B cell (primary cell): ENCODE measurements at regions of chr17 and their contacts with region 1.

Region 1: GRCh38 chr17:29777663-29778062 is 152.4 kb downstream of the SSH2 start:
- DNase-seq: no peak
- ATAC-seq: no peak
- H3K4me3 ChIP-seq: no peak overlapping the region
- H3K4me3 Mint-ChIP-seq: no peak overlapping the region
- H3K27ac ChIP-seq: no peak overlapping the region
- H3K27ac Mint-ChIP-seq: no peak overlapping the region
- H3K4me1 ChIP-seq: peaks cover 9 to 10% of the 10 kb centered on the region in 2 donors
- H3K4me1 Mint-ChIP-seq: peaks cover 12% of the 10 kb centered on the region
- H3K27me3 ChIP-seq: no peaks in the 10 kb centered on the region
- H3K27me3 Mint-ChIP-seq: no peaks in the 10 kb centered on the region
- CTCF ChIP-seq: no peak

Region 2: GRCh38 chr17:29579866-29580771 is 197.5 kb before region 1 on chr17:
- CTCF ChIA-PET with region 1: interaction called, 17 read pairs
- POLR2A ChIA-PET with region 1: no interaction called
- intact Hi-C with region 1: loop called (anchors 1 kb)
- DNase-seq: peak; percentile 93
- ATAC-seq: peak; percentile 96
- H3K4me3 ChIP-seq: no peak overlapping the region
- H3K4me3 Mint-ChIP-seq: no peak overlapping the region
- H3K27ac ChIP-seq: no peak overlapping the region
- H3K27ac Mint-ChIP-seq: peak overlapping the region; percentile 87
- H3K4me1 ChIP-seq: peaks cover 19 to 23% of the 10 kb centered on the region in 2 donors
- H3K4me1 Mint-ChIP-seq: peaks cover 27% of the 10 kb centered on the region
- H3K27me3 ChIP-seq: no peaks in the 10 kb centered on the region
- H3K27me3 Mint-ChIP-seq: no peaks in the 10 kb centered on the region
- CTCF ChIP-seq: peak; percentile 79

Region 3: GRCh38 chr17:29645515-29646051 is 132.1 kb before region 1 on chr17:
- CTCF ChIA-PET with region 1: interaction called, 196 read pairs
- POLR2A ChIA-PET with region 1: no interaction called
- intact Hi-C with region 1: no loop called
- DNase-seq: no peak
- ATAC-seq: no peak
- H3K4me3 ChIP-seq: no peak overlapping the region
- H3K4me3 Mint-ChIP-seq: no peak overlapping the region
- H3K27ac ChIP-seq: no peak overlapping the region
- H3K27ac Mint-ChIP-seq: no peak overlapping the region
- H3K4me1 ChIP-seq: peaks cover under 1 to 2% of the 10 kb centered on the region in 2 donors
- H3K4me1 Mint-ChIP-seq: peaks cover 16% of the 10 kb centered on the region
- H3K27me3 ChIP-seq: no peaks in the 10 kb centered on the region
- H3K27me3 Mint-ChIP-seq: no peaks in the 10 kb centered on the region
- CTCF ChIP-seq: no peak

Region 4: DNA sequence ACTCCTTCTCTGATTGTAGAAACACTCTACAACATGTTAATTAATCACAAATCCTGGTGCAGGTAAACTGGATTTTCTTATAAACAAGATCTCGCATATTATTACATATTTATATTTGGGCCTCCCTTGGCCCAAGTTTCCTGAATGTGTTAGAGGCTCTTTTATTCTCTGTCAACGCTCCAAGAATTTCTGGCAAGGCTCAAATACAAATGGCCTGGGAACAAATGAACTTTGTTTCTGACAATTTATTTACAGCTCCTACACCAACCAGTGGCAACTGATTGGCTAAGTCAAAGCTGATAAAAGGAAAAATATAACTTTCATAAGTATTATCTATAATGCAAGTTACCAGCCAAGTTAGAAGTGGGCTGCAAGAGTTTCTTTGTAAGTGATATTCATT is 90.1 kb before region 1 on chr17:
- CTCF ChIA-PET with region 1: interaction called, 72 read pairs
- POLR2A ChIA-PET with region 1: interaction called, 8 read pairs
- intact Hi-C with region 1: loop called (anchors 1 kb)
- DNase-seq: no peak
- ATAC-seq: no peak
- H3K4me3 ChIP-seq: no peak overlapping the region
- H3K4me3 Mint-ChIP-seq: no peak overlapping the region
- H3K27ac ChIP-seq: peak overlapping the region in 1 of 2 donors; percentile 7
- H3K27ac Mint-ChIP-seq: no peak overlapping the region
- H3K4me1 ChIP-seq: peaks cover 5 to 8% of the 10 kb centered on the region in 2 donors
- H3K4me1 Mint-ChIP-seq: peaks cover 20% of the 10 kb centered on the region
- H3K27me3 ChIP-seq: no peaks in the 10 kb centered on the region
- H3K27me3 Mint-ChIP-seq: no peaks in the 10 kb centered on the region
- CTCF ChIP-seq: no peak

Region 5: GRCh38 chr17:29710891-29711418 is 66.7 kb before region 1 on chr17:
- CTCF ChIA-PET with region 1: interaction called, 16 read pairs
- POLR2A ChIA-PET with region 1: interaction called, 3 read pairs
- intact Hi-C with region 1: loop called (anchors 1 kb)
- DNase-seq: no peak
- ATAC-seq: no peak
- H3K4me3 ChIP-seq: no peak overlapping the region
- H3K4me3 Mint-ChIP-seq: peak overlapping the region; percentile 8
- H3K27ac ChIP-seq: peak overlapping the region; percentile 15 to 31
- H3K27ac Mint-ChIP-seq: peak overlapping the region; percentile 39
- H3K4me1 ChIP-seq: peaks cover 52 to 72% of the 10 kb centered on the region in 2 donors
- H3K4me1 Mint-ChIP-seq: peaks cover 81% of the 10 kb centered on the region
- H3K27me3 ChIP-seq: no peaks in the 10 kb centered on the region
- H3K27me3 Mint-ChIP-seq: no peaks in the 10 kb centered on the region
- CTCF ChIP-seq: no peak

Region 6: GRCh38 chr17:29760761-29761696 is 16.6 kb before region 1 on chr17:
- CTCF ChIA-PET with region 1: interaction called, 103 read pairs
- POLR2A ChIA-PET with region 1: no interaction called
- intact Hi-C with region 1: loop called (anchors 1 kb)
- DNase-seq: peak; percentile 97
- ATAC-seq: peak; percentile 87
- H3K4me3 ChIP-seq: peak overlapping the region; percentile 83 to 96 (median 94)
- H3K4me3 Mint-ChIP-seq: peak overlapping the region; percentile 90
- H3K27ac ChIP-seq: peak overlapping the region; percentile 80 to 83
- H3K27ac Mint-ChIP-seq: peak overlapping the region; percentile 90
- H3K4me1 ChIP-seq: peaks cover 34 to 41% of the 10 kb centered on the region in 2 donors
- H3K4me1 Mint-ChIP-seq: peaks cover 38% of the 10 kb centered on the region
- H3K27me3 ChIP-seq: no peaks in the 10 kb centered on the region
- H3K27me3 Mint-ChIP-seq: no peaks in the 10 kb centered on the region
- CTCF ChIP-seq: no peak

Region 7: GRCh38 chr17:29870836-29871465 is 93.3 kb after region 1 on chr17:
- CTCF ChIA-PET with region 1: no interaction called
- POLR2A ChIA-PET with region 1: no interaction called
- intact Hi-C with region 1: no loop called
- DNase-seq: no peak
- ATAC-seq: no peak
- H3K4me3 ChIP-seq: no peak overlapping the region
- H3K4me3 Mint-ChIP-seq: no peak overlapping the region
- H3K27ac ChIP-seq: no peak overlapping the region
- H3K27ac Mint-ChIP-seq: no peak overlapping the region
- H3K4me1 ChIP-seq: peaks cover 18 to 23% of the 10 kb centered on the region in 2 donors
- H3K4me1 Mint-ChIP-seq: peaks cover 46% of the 10 kb centered on the region
- H3K27me3 ChIP-seq: no peaks in the 10 kb centered on the region
- H3K27me3 Mint-ChIP-seq: no peaks in the 10 kb centered on the region
- CTCF ChIP-seq: no peak